Activated naive CD4-positive, alpha-beta T cell treated with anti-CD3 and anti-CD28 coated beads for 36 hours (primary cell): ENCODE measurements at regions of chr14 and their contacts with region 1.

Region 1: DNA sequence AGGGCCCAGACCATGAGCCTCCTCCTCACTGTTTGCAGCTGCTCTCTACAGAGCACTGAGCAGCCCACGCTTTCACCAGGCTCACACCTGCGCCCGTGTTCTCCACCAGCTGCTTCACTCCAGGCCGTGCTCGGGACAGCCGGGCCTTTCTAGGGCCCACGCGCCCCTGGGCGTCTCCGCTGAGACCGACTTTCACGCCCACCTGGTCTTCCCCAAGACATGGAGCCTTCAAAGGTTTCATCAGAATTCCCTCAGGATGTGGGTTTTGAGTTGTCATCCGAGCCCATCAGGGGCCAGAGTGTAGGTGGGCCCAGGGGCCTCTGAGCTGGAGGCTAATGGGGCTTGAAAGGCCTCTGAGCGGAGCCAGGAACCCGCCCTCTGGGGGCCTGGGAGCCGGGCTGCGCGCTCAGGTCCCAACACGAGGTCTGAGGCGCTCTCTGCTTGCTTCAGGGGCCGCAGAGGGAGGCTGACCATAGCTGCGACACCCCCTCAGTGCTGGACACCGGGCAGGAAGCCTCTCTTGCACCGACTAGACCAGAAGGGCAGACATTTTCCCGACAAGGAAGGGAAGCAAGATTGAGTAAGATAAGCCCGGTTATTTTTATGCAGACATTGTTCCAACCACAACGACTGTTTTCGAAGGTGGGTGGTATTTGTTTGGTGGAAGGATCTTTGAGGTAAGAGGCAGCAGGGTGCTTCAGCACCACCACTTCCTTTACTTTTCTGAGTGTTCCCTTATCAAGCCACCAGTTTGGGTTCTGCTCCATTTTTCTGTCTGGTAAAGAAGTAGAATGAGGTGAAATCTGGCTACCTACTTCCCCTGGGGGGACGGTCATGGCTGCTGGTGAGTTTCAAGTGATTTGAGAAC is 125.0 kb upstream of the FUT8 start:
- DNase-seq: peak; percentile 66
- H3K4me3 Mint-ChIP-seq: peak overlapping the region; percentile 74
- H3K27ac Mint-ChIP-seq: peak overlapping the region; percentile 98
- H3K4me1 Mint-ChIP-seq: peaks cover 64% of the 10 kb centered on the region
- H3K27me3 Mint-ChIP-seq: no peaks in the 10 kb centered on the region

Region 2: GRCh38 chr14:65153101-65153500 is 134.4 kb before region 1 on chr14:
- CTCF ChIA-PET with region 1: no interaction called
- intact Hi-C with region 1: no loop called
- DNase-seq: no peak
- H3K4me3 Mint-ChIP-seq: no peak overlapping the region
- H3K27ac Mint-ChIP-seq: no peak overlapping the region
- H3K4me1 Mint-ChIP-seq: no peaks in the 10 kb centered on the region
- H3K27me3 Mint-ChIP-seq: no peaks in the 10 kb centered on the region

Region 3: GRCh38 chr14:65302571-65303189 is 15.2 kb after region 1 on chr14:
- CTCF ChIA-PET with region 1: interaction called, 8 read pairs
- intact Hi-C with region 1: loop called (anchors 1 kb)
- DNase-seq: peak; percentile 82
- H3K4me3 Mint-ChIP-seq: peak overlapping the region; percentile 23
- H3K27ac Mint-ChIP-seq: peak overlapping the region; percentile 95
- H3K4me1 Mint-ChIP-seq: peaks cover 61% of the 10 kb centered on the region
- H3K27me3 Mint-ChIP-seq: no peaks in the 10 kb centered on the region

Region 4: GRCh38 chr14:65356327-65356852 is 68.9 kb after region 1 on chr14:
- CTCF ChIA-PET with region 1: no interaction called
- intact Hi-C with region 1: loop called (anchors 2 kb)
- DNase-seq: peak; percentile 77
- H3K4me3 Mint-ChIP-seq: no peak overlapping the region
- H3K27ac Mint-ChIP-seq: peak overlapping the region; percentile 63
- H3K4me1 Mint-ChIP-seq: peaks cover 44% of the 10 kb centered on the region
- H3K27me3 Mint-ChIP-seq: no peaks in the 10 kb centered on the region